A673 (cell line): ENCODE measurements at regions of chr16 and their contacts with region 1.

Region 1: DNA sequence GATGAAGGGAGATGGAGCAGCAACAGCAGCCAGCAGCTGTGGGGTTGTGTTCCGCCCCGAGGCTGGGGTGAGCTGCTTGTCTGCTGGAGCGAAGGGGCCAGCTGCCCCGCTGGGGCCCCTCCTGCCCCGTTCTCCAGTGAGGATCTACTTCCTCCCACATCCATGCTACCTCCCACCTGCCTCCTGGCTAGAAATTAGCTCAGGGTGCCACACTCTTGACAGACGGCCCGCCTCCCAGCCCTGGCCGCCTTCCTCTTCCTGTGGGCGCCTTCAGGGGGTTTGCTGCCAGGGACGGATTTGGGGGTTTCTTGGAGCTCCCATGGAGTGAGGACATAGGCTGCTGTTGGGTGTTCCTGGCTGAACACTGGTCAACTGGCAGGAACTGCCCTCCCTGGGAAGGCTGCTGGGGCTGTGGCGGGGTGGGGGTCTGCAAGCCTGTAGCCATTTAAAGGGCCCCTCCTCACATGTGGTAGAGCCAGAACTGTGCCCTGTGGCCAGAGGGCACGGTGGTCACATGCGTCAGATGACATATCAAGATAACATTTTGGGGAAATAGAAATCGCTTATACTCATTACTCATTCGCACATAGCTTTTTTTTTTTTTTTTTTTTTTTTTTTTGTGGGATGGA is 13.1 kb downstream of the TBC1D24 start:
- DNase-seq: no peak
- H3K4me3 ChIP-seq: no peak overlapping the region
- H3K27ac ChIP-seq: no peak overlapping the region
- H3K4me1 ChIP-seq: no peaks in the 10 kb centered on the region
- H3K27me3 ChIP-seq: no peaks in the 10 kb centered on the region
- CTCF ChIP-seq: no peak

Region 2: GRCh38 chr16:1964506-1965395 is 523.3 kb before region 1 on chr16 and contains the start of gene RPS2:
- CTCF ChIA-PET with region 1: no interaction called
- POLR2A ChIA-PET with region 1: no interaction called
- intact Hi-C with region 1: no loop called
- DNase-seq: peak; percentile 99
- H3K4me3 ChIP-seq: peak within 1 kb of the TSS; percentile 88
- H3K27ac ChIP-seq: peak within 1 kb of the TSS; percentile 95
- H3K4me1 ChIP-seq: peaks cover 19% of the 10 kb centered on the region
- H3K27me3 ChIP-seq: no peaks in the 10 kb centered on the region
- CTCF ChIP-seq: peak; percentile 3; the same call in 1 of the 2 replicates
- total RNA-seq, gene RPS2: 3,326 and 3,385 TPM in 2 replicates

Region 3: GRCh38 chr16:2520092-2520783 is 32.2 kb after region 1 on chr16 and contains the start of gene AMDHD2:
- CTCF ChIA-PET with region 1: no interaction called
- POLR2A ChIA-PET with region 1: interaction called, 13 read pairs
- intact Hi-C with region 1: no loop called
- DNase-seq: peak; percentile 94
- H3K4me3 ChIP-seq: peak within 1 kb of the TSS; percentile 65
- H3K27ac ChIP-seq: peak within 1 kb of the TSS; percentile 77
- H3K4me1 ChIP-seq: peaks cover 12% of the 10 kb centered on the region
- H3K27me3 ChIP-seq: no peaks in the 10 kb centered on the region
- CTCF ChIP-seq: no peak
- total RNA-seq, gene AMDHD2: 52.2 and 53.3 TPM in 2 replicates

Region 4: DNA sequence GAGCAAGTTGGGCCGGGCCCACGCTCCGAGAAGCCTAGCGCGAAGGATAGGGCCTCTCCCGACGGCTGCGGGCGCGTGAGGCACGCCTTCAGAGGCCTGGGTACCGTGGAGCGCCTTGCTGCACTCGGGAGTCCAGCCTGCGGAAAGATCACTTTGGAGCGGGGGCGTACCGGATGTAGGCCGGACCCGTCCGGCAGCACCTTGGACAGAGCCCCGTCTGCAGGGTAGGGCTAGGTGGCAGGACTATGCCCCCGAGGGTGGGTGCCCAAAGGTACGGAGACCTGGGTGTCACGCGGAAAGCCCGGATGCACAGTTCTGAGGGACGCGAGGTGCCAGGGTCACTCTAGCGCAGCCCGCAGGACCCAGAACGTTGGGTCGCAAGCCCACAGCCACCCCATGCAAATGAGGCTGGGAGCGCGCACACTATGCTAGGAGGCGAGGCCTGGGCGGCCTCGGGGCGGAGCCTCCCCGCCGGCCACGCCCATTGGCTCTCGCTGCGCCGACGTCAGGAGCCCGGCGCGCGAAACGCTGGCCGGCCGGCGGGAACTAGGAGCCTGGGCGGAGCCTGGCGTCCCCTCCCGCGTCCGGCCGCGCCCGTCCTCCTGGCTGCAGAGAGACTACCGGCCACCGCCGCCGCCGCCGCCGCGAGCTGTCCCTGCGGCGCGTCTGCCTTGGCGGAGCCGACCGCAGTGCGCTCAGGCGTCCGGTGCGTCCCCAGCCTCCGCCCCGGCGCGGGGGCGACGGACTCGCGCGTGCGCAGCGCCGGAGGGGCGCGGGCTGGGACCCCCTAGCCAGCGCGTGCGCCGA is 480.9 kb after region 1 on chr16 and contains the start of gene PAQR4:
- CTCF ChIA-PET with region 1: no interaction called
- POLR2A ChIA-PET with region 1: no interaction called
- intact Hi-C with region 1: no loop called
- DNase-seq: peak; percentile 93
- H3K4me3 ChIP-seq: peak within 1 kb of the TSS; percentile 86
- H3K27ac ChIP-seq: peak within 1 kb of the TSS; percentile 84
- H3K4me1 ChIP-seq: peaks cover 28% of the 10 kb centered on the region
- H3K27me3 ChIP-seq: no peaks in the 10 kb centered on the region
- CTCF ChIP-seq: no peak
- total RNA-seq, gene PAQR4: 46.5 and 49.7 TPM in 2 replicates